Prostate gland (tissue), 2 donors: ENCODE measurements at regions of chr9 and their contacts with region 1.

Region 1: DNA sequence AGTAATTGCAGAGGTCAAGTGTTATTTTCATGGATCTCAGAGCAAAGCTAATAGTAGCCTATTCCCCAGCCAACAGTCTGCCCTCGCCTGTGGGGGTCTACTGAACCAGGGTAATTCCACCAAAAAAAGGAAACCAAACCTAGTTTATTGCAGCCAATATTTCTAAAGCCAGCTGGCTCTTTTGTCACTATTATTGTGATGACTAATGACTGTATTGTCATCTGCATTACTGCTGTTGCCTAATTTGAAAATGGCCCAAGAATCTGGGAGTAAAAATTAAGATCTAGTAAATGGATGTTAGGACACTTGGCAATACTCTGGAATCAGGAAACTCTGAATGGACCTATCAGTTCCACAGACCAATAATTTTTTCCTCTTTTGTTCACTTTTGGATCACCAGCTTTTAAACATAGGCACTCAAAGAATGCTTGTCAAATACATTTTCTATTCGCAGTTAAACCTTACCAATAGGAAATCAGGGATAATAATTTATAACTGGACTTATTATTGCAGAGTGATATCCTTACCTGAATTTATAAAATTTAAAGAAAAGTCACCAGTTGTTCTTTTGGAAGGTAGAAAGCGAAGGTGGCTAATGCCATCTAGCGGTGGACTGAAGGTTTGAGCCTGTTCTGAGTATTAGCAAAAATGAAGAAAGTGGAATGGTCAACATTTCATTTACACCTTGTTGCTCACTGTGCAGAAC is 69.2 kb downstream of the SYK start:
- DNase-seq: no peak
- H3K4me3 ChIP-seq: no peak overlapping the region
- H3K27ac ChIP-seq: no peak overlapping the region
- H3K4me1 ChIP-seq: no peaks in the 10 kb centered on the region
- H3K27me3 ChIP-seq: no peaks in the 10 kb centered on the region
- CTCF ChIP-seq: peak; percentile 61 to 74 (median 70)
- POLR2A ChIP-seq: no peak

Region 2: DNA sequence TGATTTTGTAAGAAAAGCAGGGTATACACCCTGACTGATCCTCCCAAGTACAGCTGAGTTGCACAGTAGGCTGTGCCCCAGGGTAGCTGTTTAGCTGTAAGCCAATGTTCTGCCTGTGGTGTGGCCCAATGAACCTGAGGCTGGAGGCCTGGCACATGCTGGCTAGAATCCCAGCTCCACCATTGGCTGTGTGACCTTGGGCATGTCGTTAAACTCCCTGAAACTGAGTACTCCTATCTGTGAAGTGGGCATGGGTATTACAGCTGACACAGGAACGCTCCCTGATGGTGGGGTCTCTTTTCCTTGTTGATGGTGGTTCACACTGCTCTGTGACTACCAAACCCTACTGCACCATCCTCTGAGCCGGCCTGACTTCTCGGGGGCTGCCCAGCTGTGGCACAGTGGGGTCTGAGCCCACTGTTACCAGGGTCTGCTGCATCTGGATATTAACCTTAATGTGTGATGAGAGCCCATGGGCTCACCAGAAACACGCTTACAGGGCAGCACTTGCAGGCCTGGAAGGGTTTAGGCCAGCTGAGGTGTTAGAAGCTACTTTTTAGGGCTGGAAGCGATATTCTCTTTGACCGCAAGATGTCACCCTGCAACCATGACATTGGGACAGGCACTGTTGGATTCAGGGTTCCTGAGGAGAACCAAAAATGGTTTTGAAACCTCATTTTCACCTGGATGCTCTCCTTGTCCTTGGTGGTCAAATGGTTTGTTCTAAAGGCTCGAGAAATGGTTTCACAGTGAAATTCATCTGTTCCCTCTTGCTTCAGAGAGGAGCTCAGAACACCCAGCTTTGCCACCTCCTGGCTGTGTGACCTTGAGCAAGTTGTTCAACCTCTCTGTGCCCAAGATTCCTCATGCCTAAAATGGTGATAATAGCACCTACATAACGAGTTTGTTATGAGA is 1272.8 kb before region 1 on chr9:
- intact Hi-C with region 1: loop called (anchors 5 kb)
- DNase-seq: peak; percentile 61
- H3K4me3 ChIP-seq: no peak overlapping the region
- H3K27ac ChIP-seq: no peak overlapping the region
- H3K4me1 ChIP-seq: no peaks in the 10 kb centered on the region
- H3K27me3 ChIP-seq: no peaks in the 10 kb centered on the region
- CTCF ChIP-seq: peak; percentile 25 to 85 (median 72)
- POLR2A ChIP-seq: no peak

Region 3: GRCh38 chr9:89808076-89808755 is 1062.6 kb before region 1 on chr9:
- intact Hi-C with region 1: no loop called
- DNase-seq: no peak
- H3K4me3 ChIP-seq: no peak overlapping the region
- H3K27ac ChIP-seq: no peak overlapping the region
- H3K4me1 ChIP-seq: no peaks in the 10 kb centered on the region
- H3K27me3 ChIP-seq: no peaks in the 10 kb centered on the region
- CTCF ChIP-seq: no peak
- POLR2A ChIP-seq: no peak

Region 4: DNA sequence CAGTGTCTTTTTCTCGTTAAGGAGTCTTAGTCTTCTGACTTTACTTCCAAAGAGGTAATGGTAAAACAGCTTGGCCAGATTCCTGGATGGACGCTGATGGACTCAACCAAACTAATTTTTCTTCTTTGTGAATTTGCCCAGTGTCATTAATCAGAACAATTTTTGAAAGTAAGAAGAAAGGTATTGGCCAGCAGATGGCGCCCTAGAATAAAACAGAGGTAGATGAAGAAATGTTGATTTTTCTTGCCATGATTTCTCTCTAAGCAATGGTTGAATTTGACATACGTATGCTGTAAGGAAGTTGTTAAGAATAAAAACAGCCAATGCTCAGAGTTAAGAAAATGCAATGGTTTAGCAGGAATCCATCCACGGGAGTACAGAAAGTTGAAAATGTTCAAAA is 728.2 kb before region 1 on chr9:
- intact Hi-C with region 1: loop called (anchors 5 kb)
- DNase-seq: peak; percentile 40
- H3K4me3 ChIP-seq: no peak overlapping the region
- H3K27ac ChIP-seq: no peak overlapping the region
- H3K4me1 ChIP-seq: no peaks in the 10 kb centered on the region
- H3K27me3 ChIP-seq: no peaks in the 10 kb centered on the region
- CTCF ChIP-seq: peak in 3 of 4 experiments; percentile 44 to 68 (median 53)
- POLR2A ChIP-seq: no peak

Region 5: DNA sequence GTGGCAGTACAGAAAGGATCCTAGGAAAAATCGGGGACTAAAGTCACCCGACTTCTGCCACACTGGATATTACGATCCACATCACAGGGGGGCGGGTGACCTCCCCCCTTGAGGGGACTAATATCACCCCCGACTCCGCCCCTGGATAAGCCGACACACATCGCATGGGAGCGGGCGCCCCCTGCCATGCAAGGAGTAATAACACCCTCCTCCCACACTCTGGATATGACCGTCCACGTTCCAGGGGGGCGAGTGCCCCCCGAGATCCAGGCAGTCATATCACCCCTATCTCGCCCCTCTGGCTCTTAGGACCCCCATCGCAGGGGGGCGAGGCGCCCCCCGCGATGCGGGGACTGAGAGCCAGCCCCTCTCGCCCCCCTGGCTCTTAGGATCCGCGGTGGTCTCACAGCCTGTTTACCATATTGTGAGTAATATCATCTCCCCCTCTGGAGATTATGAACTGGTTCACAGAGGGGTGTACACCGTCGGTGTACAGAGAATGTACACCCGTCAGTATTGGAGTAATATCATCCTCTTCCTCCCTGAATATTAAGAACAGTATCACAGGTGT is 651.1 kb before region 1 on chr9:
- intact Hi-C with region 1: loop called (anchors 10 kb)
- DNase-seq: no peak
- H3K4me3 ChIP-seq: no peak overlapping the region
- H3K27ac ChIP-seq: no peak overlapping the region
- H3K4me1 ChIP-seq: no peaks in the 10 kb centered on the region
- H3K27me3 ChIP-seq: no peaks in the 10 kb centered on the region
- CTCF ChIP-seq: peak in 2 of 4 experiments; percentile 6 to 24
- POLR2A ChIP-seq: no peak